ENCODE measurements at regions of chr10 and their contacts with region 1.

Region 1: GRCh38 chr10:31864834-31865518 is 63.7 kb downstream of the ARHGAP12 start:
- DNase-seq: no peak
- H3K4me3 Mint-ChIP-seq: no peak overlapping the region
- H3K27ac Mint-ChIP-seq: no peak overlapping the region
- H3K4me1 Mint-ChIP-seq: peaks cover 7% of the 10 kb centered on the region
- H3K27me3 Mint-ChIP-seq: no peaks in the 10 kb centered on the region

Region 2: DNA sequence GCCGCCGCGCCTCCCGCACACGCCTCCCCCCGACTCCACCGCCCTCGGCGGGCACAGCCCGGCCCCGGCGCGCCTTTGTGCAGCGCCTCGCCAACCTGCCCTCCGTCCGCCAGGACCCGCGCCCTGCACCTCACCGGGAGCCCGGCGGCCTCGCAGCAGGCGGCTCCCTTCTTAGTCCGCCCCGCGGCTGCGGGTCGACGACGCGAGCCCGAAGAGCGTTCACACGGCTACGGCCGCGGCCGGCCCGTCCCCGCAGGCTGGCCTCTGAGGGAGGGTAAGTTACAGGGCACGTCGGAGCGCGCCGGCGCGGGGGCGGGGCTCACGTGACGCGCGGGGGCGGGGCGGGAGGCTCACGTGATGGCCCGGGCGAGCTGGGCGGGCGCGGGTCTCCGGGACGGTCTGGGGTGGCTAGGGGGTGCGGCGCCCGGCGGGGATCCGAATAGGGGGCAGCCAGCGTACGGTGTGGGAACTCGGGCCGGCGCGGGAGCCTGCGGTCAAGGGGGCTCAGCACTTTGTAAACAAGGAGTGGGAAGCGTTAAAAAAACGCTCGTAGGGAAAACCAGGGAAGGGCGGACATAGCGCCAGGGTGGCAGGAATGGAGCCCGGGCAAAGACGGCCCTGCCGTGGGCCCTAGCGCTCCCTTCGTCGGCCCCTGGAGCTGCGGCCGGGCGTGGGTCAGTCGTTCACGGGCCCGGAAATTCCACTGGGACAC is 63.7 kb after region 1 on chr10 and contains the start of gene ARHGAP12:
- intact Hi-C with region 1: loop called (anchors 1 kb)
- DNase-seq: peak; percentile 68
- H3K4me3 Mint-ChIP-seq: peak within 1 kb of the TSS; percentile 88
- H3K27ac Mint-ChIP-seq: peak within 1 kb of the TSS; percentile 73
- H3K4me1 Mint-ChIP-seq: peaks cover 56% of the 10 kb centered on the region
- H3K27me3 Mint-ChIP-seq: peaks cover 13% of the 10 kb centered on the region
- total RNA-seq, gene ARHGAP12: 2.4 and 3.5 TPM in 2 replicates

Region 3: GRCh38 chr10:31947144-31947926 is 82.4 kb after region 1 on chr10:
- intact Hi-C with region 1: loop called (anchors 5 kb)
- DNase-seq: no peak
- H3K4me3 Mint-ChIP-seq: no peak overlapping the region
- H3K27ac Mint-ChIP-seq: no peak overlapping the region
- H3K4me1 Mint-ChIP-seq: no peaks in the 10 kb centered on the region
- H3K27me3 Mint-ChIP-seq: peaks cover 5% of the 10 kb centered on the region

Region 4: GRCh38 chr10:32005050-32005449 is 140.1 kb after region 1 on chr10:
- intact Hi-C with region 1: loop called (anchors 1 kb)
- DNase-seq: peak; percentile 17
- H3K4me3 Mint-ChIP-seq: no peak overlapping the region
- H3K27ac Mint-ChIP-seq: no peak overlapping the region
- H3K4me1 Mint-ChIP-seq: peaks cover 15% of the 10 kb centered on the region
- H3K27me3 Mint-ChIP-seq: no peaks in the 10 kb centered on the region

Region 5: GRCh38 chr10:32207544-32207943 is 342.6 kb after region 1 on chr10:
- intact Hi-C with region 1: loop called (anchors 1 kb)
- DNase-seq: peak; percentile 45
- H3K4me3 Mint-ChIP-seq: no peak overlapping the region
- H3K27ac Mint-ChIP-seq: no peak overlapping the region
- H3K4me1 Mint-ChIP-seq: peaks cover 5% of the 10 kb centered on the region
- H3K27me3 Mint-ChIP-seq: no peaks in the 10 kb centered on the region

Region 6: GRCh38 chr10:32367793-32368453 is 502.9 kb after region 1 on chr10:
- intact Hi-C with region 1: loop called (anchors 5 kb)
- DNase-seq: peak; percentile 49
- H3K4me3 Mint-ChIP-seq: no peak overlapping the region
- H3K27ac Mint-ChIP-seq: peak overlapping the region; percentile 8
- H3K4me1 Mint-ChIP-seq: peaks cover 45% of the 10 kb centered on the region
- H3K27me3 Mint-ChIP-seq: no peaks in the 10 kb centered on the region

Measured in activated T-helper 1 cell treated with anti-CD3 and anti-CD28 coated beads, Interleukin-12 subunit alpha, Interleukin-12 subunit beta, Interleukin-2, Interleukin-4 antibody, amounts not matched to agents 30 ng/mL and 10 ng/mL and 1 ng/mL, durations not matched to agents 14 hours and 24 hours and 36 hours (primary cell).